ENCODE measurements at regions of chr11 and their contacts with region 1.

Region 1: DNA sequence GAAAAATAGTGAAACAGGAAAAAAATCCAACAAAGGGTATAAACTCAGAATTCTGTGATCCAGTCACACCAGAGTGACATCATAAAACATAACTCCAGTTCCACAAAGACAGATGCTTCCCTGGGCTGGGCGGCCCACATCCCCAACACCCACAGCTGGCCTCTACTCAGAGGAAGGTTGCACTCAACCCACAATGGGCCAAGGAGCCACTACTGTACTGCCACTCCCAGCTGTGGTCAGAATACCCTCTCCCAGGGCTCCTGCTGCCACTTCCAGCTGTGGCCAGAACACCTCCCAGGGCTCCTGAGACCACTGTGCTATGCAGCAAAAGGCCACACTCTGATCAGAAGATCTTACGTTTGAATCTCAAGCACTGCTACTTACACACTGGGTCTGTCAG is 18.3 kb downstream of the SMCO4 start:
- DNase-seq: no peak
- H3K4me3 ChIP-seq: no peak overlapping the region
- H3K27ac ChIP-seq: no peak overlapping the region
- H3K27me3 ChIP-seq: no peaks in the 10 kb centered on the region
- CTCF ChIP-seq: no peak

Region 2: DNA sequence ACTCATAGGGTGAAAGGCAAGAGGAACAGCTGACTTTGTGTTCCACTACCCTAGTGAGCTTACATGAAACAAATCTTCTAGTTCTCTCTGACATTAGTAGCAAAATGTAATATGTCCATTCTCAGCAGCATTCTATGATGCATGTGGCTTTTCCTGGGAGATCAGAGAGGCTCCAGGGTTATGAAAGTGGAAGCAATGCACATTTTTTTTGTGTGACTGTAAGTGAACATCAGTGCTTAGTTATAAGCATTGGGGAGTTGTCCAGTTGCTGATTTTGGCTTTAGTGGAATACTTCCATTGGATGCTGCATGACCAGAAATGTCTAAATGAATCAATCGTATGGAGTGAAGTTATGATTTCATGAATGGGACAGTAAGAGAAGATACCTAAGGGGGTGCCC is 1044.4 kb before region 1 on chr11:
- CTCF ChIA-PET with region 1: no interaction called
- POLR2A ChIA-PET with region 1: no interaction called
- DNase-seq: no peak
- H3K4me3 ChIP-seq: no peak overlapping the region
- H3K27ac ChIP-seq: no peak overlapping the region
- H3K27me3 ChIP-seq: no peaks in the 10 kb centered on the region
- CTCF ChIP-seq: no peak

Region 3: DNA sequence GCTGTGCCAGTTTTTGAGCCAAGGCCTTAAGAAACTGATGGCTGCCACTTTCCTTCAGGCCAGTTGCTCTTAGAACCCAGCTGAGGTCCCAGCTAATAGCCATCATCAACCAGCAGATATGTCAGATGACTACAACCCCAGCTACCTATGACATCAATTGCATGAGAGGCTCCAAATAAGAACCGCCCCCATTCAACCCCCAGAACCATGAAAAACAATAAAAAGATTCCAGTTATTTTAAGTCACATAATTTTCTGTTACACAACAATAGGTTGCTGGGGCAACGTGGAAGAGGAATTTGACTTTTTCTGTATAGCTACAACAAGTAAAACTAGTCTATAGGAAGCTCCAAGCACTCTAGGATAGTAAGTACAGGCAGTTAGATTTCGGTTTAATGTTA is 771.7 kb before region 1 on chr11:
- CTCF ChIA-PET with region 1: interaction called, 12 read pairs
- POLR2A ChIA-PET with region 1: no interaction called
- DNase-seq: no peak
- H3K4me3 ChIP-seq: no peak overlapping the region
- H3K27ac ChIP-seq: no peak overlapping the region
- H3K27me3 ChIP-seq: no peaks in the 10 kb centered on the region
- CTCF ChIP-seq: no peak